Ascending aorta (tissue), 2 donors: ENCODE measurements at regions of chr10 and their contacts with region 1.

Region 1: GRCh38 chr10:122021379-122021778 is 32.4 kb downstream of the TACC2 start:
- DNase-seq: no peak
- H3K4me3 ChIP-seq: peak overlapping the region; percentile 30 to 60
- H3K27ac ChIP-seq: peak overlapping the region; percentile 74 to 76
- H3K4me1 ChIP-seq: peaks cover 0 to 7% of the 10 kb centered on the region in 2 donors
- H3K27me3 ChIP-seq: no peaks in the 10 kb centered on the region
- CTCF ChIP-seq: no peak

Region 2: GRCh38 chr10:121994390-121994961 is 26.9 kb before region 1 on chr10:
- intact Hi-C with region 1: loop called (anchors 2 kb)
- DNase-seq: peak in 1 of 2 donors; percentile 80
- H3K4me3 ChIP-seq: peak overlapping the region in 1 of 2 donors; percentile 55
- H3K27ac ChIP-seq: peak overlapping the region; percentile 83 to 90
- H3K4me1 ChIP-seq: peaks cover 4 to 30% of the 10 kb centered on the region in 2 donors
- H3K27me3 ChIP-seq: no peaks in the 10 kb centered on the region
- CTCF ChIP-seq: peak in 1 of 3 experiments; percentile 24

Region 3: DNA sequence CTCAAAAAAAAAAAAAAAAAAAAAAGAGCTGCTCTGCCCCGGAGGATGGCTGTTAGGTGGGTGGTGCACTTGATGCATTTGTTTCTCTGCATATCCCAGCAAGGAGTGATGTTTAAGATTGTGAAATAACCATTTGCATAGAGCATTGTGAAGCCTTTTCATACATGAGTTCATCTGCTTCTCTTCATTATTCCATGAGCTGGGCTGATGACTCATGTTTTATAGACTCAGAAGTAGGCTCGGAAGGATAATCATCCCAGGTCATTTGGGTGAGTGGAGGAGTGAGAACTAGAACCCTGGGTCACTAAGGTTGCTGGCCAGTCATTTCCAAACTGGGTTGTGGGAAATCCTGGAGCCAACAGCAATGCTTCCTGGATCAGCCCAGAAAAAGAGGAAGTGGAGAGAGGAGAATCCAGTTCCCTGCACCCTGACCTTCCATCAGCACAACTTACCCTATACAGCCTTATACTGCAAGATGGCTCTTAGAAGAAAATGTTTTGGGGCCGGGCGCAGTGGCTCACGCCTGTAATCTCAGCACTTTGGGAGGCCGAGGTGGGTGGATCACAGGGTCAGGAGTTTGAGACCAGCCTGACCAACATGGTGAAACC is 12.9 kb after region 1 on chr10:
- intact Hi-C with region 1: no loop called
- DNase-seq: no peak
- H3K4me3 ChIP-seq: no peak overlapping the region
- H3K27ac ChIP-seq: no peak overlapping the region
- H3K4me1 ChIP-seq: peaks cover 0 to 19% of the 10 kb centered on the region in 2 donors
- H3K27me3 ChIP-seq: no peaks in the 10 kb centered on the region
- CTCF ChIP-seq: no peak

Region 4: GRCh38 chr10:122098924-122099323 is 77.5 kb after region 1 on chr10:
- intact Hi-C with region 1: no loop called
- DNase-seq: peak in 1 of 2 donors; percentile 85
- H3K4me3 ChIP-seq: no peak overlapping the region
- H3K27ac ChIP-seq: peak overlapping the region; percentile 62 to 77
- H3K4me1 ChIP-seq: peaks cover 4 to 37% of the 10 kb centered on the region in 2 donors
- H3K27me3 ChIP-seq: no peaks in the 10 kb centered on the region
- CTCF ChIP-seq: no peak